ENCODE measurements at regions of chr12 and their contacts with region 1.

Region 1: DNA sequence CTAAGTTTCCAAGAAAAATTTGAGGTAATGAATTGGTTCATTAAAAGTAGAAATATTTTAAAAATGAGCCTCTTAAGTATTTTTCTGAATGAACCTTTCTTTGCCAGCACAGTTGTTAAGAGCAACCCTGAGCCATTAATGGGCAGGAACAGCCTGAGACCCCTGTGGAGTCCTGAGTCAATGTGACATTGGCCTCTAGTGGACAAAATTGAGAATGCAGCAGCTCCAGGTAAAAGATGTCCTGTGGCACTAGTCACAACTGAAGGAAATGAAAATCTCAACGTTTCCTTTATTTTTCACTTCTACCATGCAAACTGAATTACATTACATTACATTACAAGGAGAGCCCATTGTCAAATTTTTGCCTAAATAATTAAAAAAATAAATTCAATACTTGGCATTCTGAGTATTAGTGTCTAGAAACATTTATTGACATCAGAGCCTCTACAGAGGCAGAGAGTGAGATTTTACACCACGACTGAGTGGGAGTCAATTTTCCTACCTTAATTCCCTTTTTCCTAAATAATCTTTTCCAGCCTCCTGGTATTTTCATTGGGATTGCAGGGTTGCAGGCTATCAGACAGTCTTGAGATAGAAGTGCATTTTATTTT is 135.7 kb downstream of the PPM1H start:
- DNase-seq: peak in 1 of 2 donors; percentile 72
- ATAC-seq: peak in 7 of 8 donors; percentile 75 to 84 (median 80)
- H3K4me3 ChIP-seq: no peak overlapping the region
- H3K27ac ChIP-seq: no peak overlapping the region
- H3K4me1 ChIP-seq: peaks cover 0 to 6% (median 0%) of the 10 kb centered on the region in 9 donors
- H3K27me3 ChIP-seq: no peaks in the 10 kb centered on the region
- CTCF ChIP-seq: peak; percentile 86 to 97 (median 94)

Region 2: DNA sequence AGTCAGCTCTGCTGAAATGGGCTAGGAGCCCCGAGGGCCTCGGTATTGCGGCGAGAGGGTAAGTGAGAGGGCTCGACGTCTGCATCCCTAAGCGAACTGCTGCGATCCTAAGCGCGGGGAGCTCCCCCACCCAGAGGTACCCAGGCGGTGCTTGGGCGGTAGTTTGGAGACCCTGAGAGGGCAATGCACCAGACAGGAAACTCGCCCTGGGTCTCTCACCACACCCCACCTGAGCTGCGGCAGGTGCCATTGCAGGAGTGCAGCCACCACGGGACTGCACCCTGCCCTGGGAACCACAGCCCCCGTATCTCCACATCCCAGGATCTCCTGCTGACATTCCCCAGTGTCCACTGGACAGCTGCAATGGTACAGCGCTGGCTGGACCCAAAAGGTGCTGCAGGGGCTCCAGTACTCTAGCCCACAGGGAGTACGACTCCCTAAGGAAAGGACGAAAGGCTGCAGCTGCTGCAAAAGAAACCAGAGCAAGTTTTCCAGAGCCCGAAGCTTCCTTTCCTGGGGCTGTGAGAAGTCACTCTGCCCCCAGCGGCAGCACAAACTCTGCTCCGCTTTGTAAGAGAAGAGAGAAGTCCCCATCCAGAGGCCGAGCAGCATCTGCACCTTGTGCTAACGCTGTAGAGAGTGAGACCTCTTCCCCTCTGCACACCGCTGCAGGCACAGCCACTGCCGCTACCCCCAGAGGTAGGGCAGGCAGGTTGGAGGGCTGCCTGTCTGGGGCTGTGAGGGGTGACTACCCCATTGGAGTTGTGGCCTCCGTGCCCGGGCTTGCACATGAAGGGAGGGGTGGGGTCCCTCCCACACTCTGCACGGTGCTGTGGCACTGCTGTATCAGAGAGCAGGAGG is 363.7 kb before region 1 on chr12:
- intact Hi-C with region 1: loop called (anchors 2 to 5 kb)
- DNase-seq: peak; percentile 16 to 29
- ATAC-seq: peak; percentile 46 to 85 (median 81)
- H3K4me3 ChIP-seq: peak overlapping the region in 9 of 10 donors; percentile 34 to 60 (median 54)
- H3K27ac ChIP-seq: no peak overlapping the region
- H3K4me1 ChIP-seq: peaks cover 0 to 18% (median 13%) of the 10 kb centered on the region in 9 donors
- H3K27me3 ChIP-seq: peaks cover 0 to 43% (median 35%) of the 10 kb centered on the region in 7 donors
- CTCF ChIP-seq: peak in 7 of 9 donors; percentile 19 to 64 (median 55)

Region 3: GRCh38 chr12:62603061-62603810 is 196.0 kb before region 1 on chr12:
- intact Hi-C with region 1: loop called in 7 of 10 experiments (anchors 1 to 5 kb)
- DNase-seq: peak; percentile 86 to 87
- ATAC-seq: peak; percentile 90 to 98 (median 93)
- H3K4me3 ChIP-seq: peak overlapping the region; percentile 55 to 97 (median 80)
- H3K27ac ChIP-seq: peak overlapping the region; percentile 99 to 100 (median 100)
- H3K4me1 ChIP-seq: peaks cover 0 to 45% (median 20%) of the 10 kb centered on the region in 9 donors
- H3K27me3 ChIP-seq: no peaks in the 10 kb centered on the region
- CTCF ChIP-seq: peak; percentile 29 to 79 (median 52)

Region 4: DNA sequence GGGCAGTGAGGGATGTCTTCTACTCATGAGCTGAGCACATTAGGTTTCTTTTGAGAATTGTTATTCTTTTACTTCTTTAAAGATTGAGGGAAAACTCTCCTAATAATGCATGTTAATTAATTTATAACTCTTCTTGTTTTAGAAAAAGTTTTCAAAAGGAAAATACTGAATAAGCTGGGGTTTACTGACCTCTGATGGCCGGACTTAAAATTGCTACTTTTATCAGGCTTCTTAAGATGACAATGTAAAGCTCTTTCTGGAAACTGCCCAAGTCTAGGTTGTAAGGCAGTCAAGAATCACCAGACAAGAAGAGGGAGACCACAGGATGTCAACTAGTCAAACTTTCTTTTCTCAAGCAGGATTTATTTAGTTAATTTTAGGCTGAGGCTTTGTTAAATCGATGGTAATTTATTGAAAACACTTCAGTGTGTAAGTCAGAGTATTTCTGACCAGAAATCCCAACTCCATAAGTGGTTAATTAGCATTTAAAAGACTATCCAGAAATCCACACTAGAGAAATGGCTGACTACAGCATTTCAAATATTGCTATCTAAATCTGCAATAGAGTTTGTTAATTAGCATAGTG is 269.7 kb after region 1 on chr12:
- intact Hi-C with region 1: loop called in 2 of 10 experiments (anchors 10 kb)
- DNase-seq: peak in 1 of 2 donors; percentile 6
- ATAC-seq: peak in 1 of 8 donors; percentile 64
- H3K4me3 ChIP-seq: no peak overlapping the region
- H3K27ac ChIP-seq: peak overlapping the region in 1 of 10 donors; percentile 23
- H3K4me1 ChIP-seq: peaks cover 0 to 11% (median 4%) of the 10 kb centered on the region in 9 donors
- H3K27me3 ChIP-seq: no peaks in the 10 kb centered on the region
- CTCF ChIP-seq: peak in 8 of 9 donors; percentile 30 to 73 (median 65)

Region 5: GRCh38 chr12:64759035-64759901 is 1960.0 kb after region 1 on chr12 and contains the start of gene GNS:
- intact Hi-C with region 1: loop called in 1 of 10 experiments (anchors 5 kb)
- DNase-seq: peak; percentile 97
- ATAC-seq: peak; percentile 98 to 100 (median 99)
- H3K4me3 ChIP-seq: peak within 1 kb of the TSS; percentile 71 to 98 (median 92)
- H3K27ac ChIP-seq: peak within 1 kb of the TSS; percentile 57 to 94 (median 88)
- H3K4me1 ChIP-seq: peaks cover 0 to 62% (median 20%) of the 10 kb centered on the region in 9 donors
- H3K27me3 ChIP-seq: no peaks in the 10 kb centered on the region
- CTCF ChIP-seq: no peak
- total RNA-seq, gene GNS: 89.1 to 204 (median 102) TPM

Measured in heart right ventricle (tissue), 16 donors.